A673 (cell line): ENCODE measurements at regions of chr9 and their contacts with region 1.

Region 1: DNA sequence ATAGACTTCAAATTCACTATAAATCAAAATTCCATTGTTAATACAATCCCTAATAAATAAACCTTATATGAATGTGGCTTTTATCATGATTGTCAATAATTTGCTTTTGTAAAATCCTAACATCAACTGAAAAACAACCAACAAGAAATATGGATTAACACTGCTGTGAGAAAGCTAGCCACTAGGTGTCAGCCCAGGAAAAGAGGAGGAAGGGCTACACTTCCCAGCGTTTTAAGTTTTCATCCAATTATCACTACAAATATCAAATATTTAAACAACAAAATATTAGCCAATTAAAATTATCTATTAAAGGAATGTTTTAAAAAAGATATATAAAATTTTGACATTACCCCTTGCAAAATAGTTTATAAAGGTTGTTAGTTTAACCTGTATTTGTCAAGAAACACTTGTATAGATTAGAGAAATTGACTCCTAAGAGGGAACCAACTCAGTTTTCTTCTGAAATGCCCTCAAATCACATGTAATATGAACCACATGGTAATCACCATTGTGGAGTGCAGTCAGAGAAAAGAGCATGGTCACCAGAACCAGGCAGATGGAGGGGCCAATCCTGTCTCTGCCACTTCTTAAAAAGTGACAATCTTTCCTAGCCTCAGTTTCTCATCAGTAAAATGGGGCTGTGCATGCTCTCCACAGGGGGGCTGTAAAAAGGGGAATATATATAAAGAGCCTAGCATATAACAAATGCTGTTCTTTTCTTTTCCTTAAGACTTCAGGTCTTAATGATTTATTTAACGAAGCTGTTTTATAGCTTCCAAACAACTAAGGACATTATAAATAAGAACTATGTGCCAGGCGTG is 188.2 kb downstream of the CRB2 start:
- DNase-seq: peak; percentile 53
- H3K4me3 ChIP-seq: no peak overlapping the region
- H3K27ac ChIP-seq: no peak overlapping the region
- H3K4me1 ChIP-seq: no peaks in the 10 kb centered on the region
- H3K27me3 ChIP-seq: no peaks in the 10 kb centered on the region
- CTCF ChIP-seq: peak; percentile 94

Region 2: DNA sequence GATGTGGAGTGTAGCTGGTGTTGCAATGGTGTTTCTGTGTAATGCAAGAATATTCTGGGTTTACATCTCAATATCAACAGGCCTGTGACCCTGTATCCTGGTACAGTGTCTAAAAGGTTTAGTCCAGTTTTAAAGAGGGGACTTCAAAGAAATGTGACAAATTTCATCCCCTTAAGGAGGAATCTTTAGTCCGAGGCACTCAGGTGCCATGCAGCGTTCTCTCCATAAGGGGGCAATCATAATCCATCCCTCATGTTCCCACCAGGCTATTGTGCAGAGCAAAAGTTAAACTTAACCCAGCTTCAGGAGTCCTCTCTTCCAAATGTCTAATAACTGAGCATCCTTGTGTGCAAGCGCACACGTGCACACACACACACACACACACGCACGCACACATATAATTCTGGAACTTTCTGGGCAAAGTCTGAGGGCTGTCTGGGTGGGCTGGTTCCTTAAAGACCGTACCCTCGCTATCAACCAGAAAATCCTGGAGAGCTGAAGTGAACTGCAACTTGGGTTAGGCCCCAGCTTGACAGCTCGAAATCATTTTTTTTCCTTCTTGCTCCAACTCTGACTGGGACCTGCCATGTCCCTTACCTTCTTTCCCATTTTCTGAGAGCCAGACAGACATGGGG is 142.2 kb before region 1 on chr9:
- CTCF ChIA-PET with region 1: no interaction called
- POLR2A ChIA-PET with region 1: no interaction called
- intact Hi-C with region 1: loop called (anchors 2 kb)
- DNase-seq: peak; percentile 68
- H3K4me3 ChIP-seq: no peak overlapping the region
- H3K27ac ChIP-seq: no peak overlapping the region
- H3K4me1 ChIP-seq: peaks cover 11% of the 10 kb centered on the region
- H3K27me3 ChIP-seq: no peaks in the 10 kb centered on the region
- CTCF ChIP-seq: peak; percentile 86

Region 3: DNA sequence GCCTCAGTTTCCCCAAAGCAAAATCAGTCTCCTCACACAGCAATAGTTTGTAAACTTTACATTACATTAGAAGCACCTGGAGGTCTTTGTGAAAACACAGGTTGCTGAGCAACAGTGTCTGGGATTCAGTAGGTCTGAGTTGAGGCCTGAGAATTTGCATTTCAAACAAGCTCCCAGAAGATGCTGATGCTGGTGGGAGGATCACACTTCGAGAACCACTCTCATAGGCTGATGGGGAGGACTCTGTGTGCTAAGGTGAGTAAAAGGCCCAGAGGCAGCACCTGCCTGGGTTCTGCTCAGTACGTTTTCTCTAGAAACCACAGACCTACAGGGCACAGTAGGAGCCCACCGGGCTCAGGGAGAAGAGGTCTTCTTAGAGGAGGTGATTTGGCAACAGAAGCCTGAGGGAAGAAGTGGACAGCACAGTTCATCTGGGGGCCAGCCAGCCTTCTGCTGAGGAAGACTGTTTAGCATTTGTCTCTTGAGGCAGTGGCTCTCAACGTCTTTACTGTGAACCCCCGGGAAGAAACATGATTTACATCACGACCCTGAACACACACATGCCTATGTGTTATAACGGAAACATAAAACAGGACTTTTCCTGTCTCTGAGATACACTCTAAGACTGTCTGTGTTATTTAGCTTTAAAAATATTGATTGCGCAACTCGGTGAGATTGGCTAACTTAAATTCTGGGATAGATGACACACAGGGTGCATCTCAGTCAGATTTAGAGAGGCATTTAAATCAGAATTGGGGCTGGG is 410.5 kb after region 1 on chr9:
- CTCF ChIA-PET with region 1: no interaction called
- POLR2A ChIA-PET with region 1: no interaction called
- intact Hi-C with region 1: no loop called
- DNase-seq: peak; percentile 74
- H3K4me3 ChIP-seq: no peak overlapping the region
- H3K27ac ChIP-seq: no peak overlapping the region
- H3K4me1 ChIP-seq: no peaks in the 10 kb centered on the region
- H3K27me3 ChIP-seq: peaks cover 28% of the 10 kb centered on the region
- CTCF ChIP-seq: no peak

Region 4: GRCh38 chr9:124011420-124012301 is 467.4 kb after region 1 on chr9 and contains the start of gene LHX2:
- CTCF ChIA-PET with region 1: no interaction called
- POLR2A ChIA-PET with region 1: no interaction called
- intact Hi-C with region 1: loop called (anchors 10 kb)
- DNase-seq: peak; percentile 90
- H3K4me3 ChIP-seq: peak within 1 kb of the TSS; percentile 26
- H3K27ac ChIP-seq: no peak within 1 kb of the TSS
- H3K4me1 ChIP-seq: peaks cover 4% of the 10 kb centered on the region
- H3K27me3 ChIP-seq: peaks cover 98% of the 10 kb centered on the region
- CTCF ChIP-seq: no peak
- total RNA-seq, gene LHX2: 0.17 and 0.26 TPM in 2 replicates

Region 5: DNA sequence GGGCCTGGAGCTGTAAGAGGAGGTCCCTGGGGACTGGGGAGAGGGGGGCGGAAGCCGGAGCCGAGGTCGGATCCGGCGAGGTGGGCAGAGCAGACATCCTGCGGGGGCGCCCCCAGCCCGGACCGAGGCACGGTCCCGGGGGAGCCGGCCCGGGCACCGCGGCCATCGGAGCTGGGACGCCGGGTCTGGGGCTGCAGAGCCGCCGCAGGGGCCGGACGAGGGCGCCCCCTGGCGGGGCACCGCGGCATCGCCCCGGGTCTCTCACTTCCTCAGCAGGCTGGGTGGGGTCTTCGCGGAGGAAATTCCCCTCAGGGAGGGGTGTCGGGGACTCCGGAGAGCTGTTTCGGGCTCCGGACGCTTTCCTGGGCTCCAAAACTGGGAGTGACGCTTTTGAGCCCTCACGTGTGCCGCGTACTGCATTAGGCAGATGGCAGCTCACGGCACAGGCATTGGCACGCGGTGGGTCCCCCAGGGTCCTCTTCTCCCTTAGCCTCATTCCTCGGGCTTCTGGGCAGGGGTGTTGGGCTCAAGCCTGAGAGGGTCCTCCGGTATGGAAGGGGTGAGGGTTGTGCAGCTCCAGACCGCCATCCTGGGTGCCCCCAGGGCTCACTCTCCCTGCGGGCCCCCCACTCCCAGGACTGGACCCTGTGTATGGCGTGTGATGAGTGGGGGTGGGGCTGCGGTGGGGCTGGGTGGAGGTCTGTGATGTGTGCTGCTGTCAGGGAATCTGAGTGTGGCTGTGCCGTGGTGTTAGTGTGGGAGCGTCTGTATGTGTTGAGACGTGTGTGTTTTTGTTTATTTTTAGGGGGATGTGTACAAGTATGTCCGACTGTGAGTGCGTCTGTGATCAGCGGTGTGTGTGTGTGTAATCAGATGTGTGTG is 497.0 kb after region 1 on chr9:
- CTCF ChIA-PET with region 1: interaction called, 8 read pairs
- POLR2A ChIA-PET with region 1: no interaction called
- intact Hi-C with region 1: loop called (anchors 2 kb)
- DNase-seq: no peak
- H3K4me3 ChIP-seq: peak overlapping the region; percentile 31
- H3K27ac ChIP-seq: no peak overlapping the region
- H3K4me1 ChIP-seq: no peaks in the 10 kb centered on the region
- H3K27me3 ChIP-seq: peaks cover 15% of the 10 kb centered on the region
- CTCF ChIP-seq: peak; percentile 83

Region 6: GRCh38 chr9:124126571-124127289 is 582.5 kb after region 1 on chr9:
- CTCF ChIA-PET with region 1: no interaction called
- POLR2A ChIA-PET with region 1: no interaction called
- intact Hi-C with region 1: loop called (anchors 10 kb)
- DNase-seq: peak; percentile 74
- H3K4me3 ChIP-seq: no peak overlapping the region
- H3K27ac ChIP-seq: no peak overlapping the region
- H3K4me1 ChIP-seq: no peaks in the 10 kb centered on the region
- H3K27me3 ChIP-seq: no peaks in the 10 kb centered on the region
- CTCF ChIP-seq: peak; percentile 96

Region 7: GRCh38 chr9:124320062-124320973 is 776.1 kb after region 1 on chr9:
- CTCF ChIA-PET with region 1: no interaction called
- POLR2A ChIA-PET with region 1: no interaction called
- intact Hi-C with region 1: loop called (anchors 1 kb)
- DNase-seq: peak; percentile 80
- H3K4me3 ChIP-seq: no peak overlapping the region
- H3K27ac ChIP-seq: no peak overlapping the region
- H3K4me1 ChIP-seq: no peaks in the 10 kb centered on the region
- H3K27me3 ChIP-seq: no peaks in the 10 kb centered on the region
- CTCF ChIP-seq: peak; percentile 89